HepG2 (cell line): ENCODE measurements at regions of chr3 and their contacts with region 1.

Region 1: GRCh38 chr3:88896026-88896425 is 211.4 kb upstream of the EPHA3 start:
- DNase-seq: no peak
- ATAC-seq: no peak
- H3K4me3 ChIP-seq: no peak overlapping the region
- H3K27ac ChIP-seq: no peak overlapping the region
- H3K4me1 ChIP-seq: no peaks in the 10 kb centered on the region
- H3K27me3 ChIP-seq: no peaks in the 10 kb centered on the region
- CTCF ChIP-seq: no peak
- EP300 ChIP-seq: no peak
- POLR2A ChIP-seq: no peak
- RAD21 ChIP-seq: no peak

Region 2: GRCh38 chr3:88926221-88926620 is 30.2 kb after region 1 on chr3:
- CTCF ChIA-PET with region 1: no interaction called
- POLR2A ChIA-PET with region 1: no interaction called
- in situ Hi-C with region 1: no loop called
- intact Hi-C with region 1: loop called (anchors 2 kb)
- DNase-seq: no peak
- ATAC-seq: no peak
- H3K4me3 ChIP-seq: no peak overlapping the region
- H3K27ac ChIP-seq: no peak overlapping the region
- H3K4me1 ChIP-seq: no peaks in the 10 kb centered on the region
- H3K27me3 ChIP-seq: no peaks in the 10 kb centered on the region
- CTCF ChIP-seq: no peak
- EP300 ChIP-seq: no peak
- POLR2A ChIP-seq: no peak
- RAD21 ChIP-seq: no peak